CD4-positive, alpha-beta memory T cell (primary cell): ENCODE measurements at regions of chr2 and their contacts with region 1.

Region 1: DNA sequence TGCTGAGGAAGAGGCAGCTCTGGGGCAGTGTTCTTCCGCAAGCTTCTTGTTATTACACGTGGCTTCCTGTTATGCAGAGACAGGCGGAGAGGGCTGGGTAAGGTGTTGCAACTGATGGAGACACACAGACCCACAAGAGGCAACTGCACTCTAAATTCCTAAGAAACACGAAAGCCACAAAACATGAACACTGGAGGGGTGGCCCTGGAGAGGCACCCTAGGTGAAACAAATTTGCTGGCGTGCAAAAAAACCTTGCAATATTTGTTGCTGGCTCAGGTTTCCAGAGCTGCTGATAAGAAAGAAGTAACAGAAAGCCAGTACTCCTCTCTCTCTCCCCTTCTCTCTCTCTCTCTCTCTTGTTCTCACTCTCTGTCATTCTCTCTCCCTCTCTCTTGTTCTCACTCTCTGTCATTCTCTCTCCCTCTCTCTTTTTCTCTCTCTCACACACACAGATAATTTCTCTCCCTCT is 31.8 kb downstream of the ARHGAP25 start:
- DNase-seq: peak; percentile 79 to 89 (median 81)
- H3K4me3 ChIP-seq: peak overlapping the region; percentile 12 to 47
- H3K4me3 Mint-ChIP-seq: peak overlapping the region; percentile 78 to 95 (median 86)
- H3K27ac ChIP-seq: peak overlapping the region; percentile 90
- H3K27ac Mint-ChIP-seq: peak overlapping the region; percentile 95 to 99 (median 98)
- H3K4me1 ChIP-seq: peaks cover 99% of the 10 kb centered on the region
- H3K4me1 Mint-ChIP-seq: peaks cover 85 to 99% (median 92%) of the 10 kb centered on the region in 4 donors
- H3K27me3 ChIP-seq: no peaks in the 10 kb centered on the region
- H3K27me3 Mint-ChIP-seq: peaks cover 0 to 2% of the 10 kb centered on the region in 2 donors

Region 2: DNA sequence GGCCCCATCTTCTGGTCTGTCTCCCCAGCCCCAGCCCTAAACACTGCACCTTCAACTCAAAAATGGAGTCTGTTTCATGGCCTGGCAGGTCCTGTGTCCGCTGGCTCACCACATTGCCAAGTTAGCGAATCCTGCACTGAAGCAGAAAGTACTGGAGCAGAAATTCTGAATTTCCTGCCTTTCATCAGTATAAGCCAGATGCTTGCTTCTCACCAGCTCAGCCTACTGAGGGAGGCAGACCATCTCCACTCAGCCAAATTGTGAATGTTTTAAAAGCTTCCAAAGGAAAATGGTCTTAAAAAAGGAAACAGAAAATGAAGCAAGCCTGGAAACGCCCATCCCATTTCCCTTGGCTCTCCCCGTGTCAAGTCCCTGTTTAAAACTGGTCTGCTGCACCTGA is 861.4 kb before region 1 on chr2:
- CTCF ChIA-PET with region 1: no interaction called
- POLR2A ChIA-PET with region 1: no interaction called
- intact Hi-C with region 1: no loop called
- DNase-seq: no peak
- H3K4me3 ChIP-seq: no peak overlapping the region
- H3K4me3 Mint-ChIP-seq: no peak overlapping the region
- H3K27ac ChIP-seq: no peak overlapping the region
- H3K27ac Mint-ChIP-seq: no peak overlapping the region
- H3K4me1 ChIP-seq: no peaks in the 10 kb centered on the region
- H3K4me1 Mint-ChIP-seq: no peaks in the 10 kb centered on the region
- H3K27me3 ChIP-seq: no peaks in the 10 kb centered on the region
- H3K27me3 Mint-ChIP-seq: peaks cover 0 to 2% of the 10 kb centered on the region in 2 donors

Region 3: GRCh38 chr2:68715353-68716041 is 50.9 kb before region 1 on chr2:
- CTCF ChIA-PET with region 1: interaction called, 5 read pairs
- POLR2A ChIA-PET with region 1: interaction called, 37 read pairs
- intact Hi-C with region 1: loop called (anchors 2 kb)
- DNase-seq: peak; percentile 39 to 55 (median 45)
- H3K4me3 ChIP-seq: peak overlapping the region in 1 of 2 donors; percentile 37
- H3K4me3 Mint-ChIP-seq: peak overlapping the region in 7 of 8 donors; percentile 44 to 76 (median 56)
- H3K27ac ChIP-seq: peak overlapping the region; percentile 29
- H3K27ac Mint-ChIP-seq: peak overlapping the region; percentile 54 to 93 (median 86)
- H3K4me1 ChIP-seq: peaks cover 63% of the 10 kb centered on the region
- H3K4me1 Mint-ChIP-seq: peaks cover 63 to 88% (median 70%) of the 10 kb centered on the region in 4 donors
- H3K27me3 ChIP-seq: no peaks in the 10 kb centered on the region
- H3K27me3 Mint-ChIP-seq: no peaks in the 10 kb centered on the region

Region 4: DNA sequence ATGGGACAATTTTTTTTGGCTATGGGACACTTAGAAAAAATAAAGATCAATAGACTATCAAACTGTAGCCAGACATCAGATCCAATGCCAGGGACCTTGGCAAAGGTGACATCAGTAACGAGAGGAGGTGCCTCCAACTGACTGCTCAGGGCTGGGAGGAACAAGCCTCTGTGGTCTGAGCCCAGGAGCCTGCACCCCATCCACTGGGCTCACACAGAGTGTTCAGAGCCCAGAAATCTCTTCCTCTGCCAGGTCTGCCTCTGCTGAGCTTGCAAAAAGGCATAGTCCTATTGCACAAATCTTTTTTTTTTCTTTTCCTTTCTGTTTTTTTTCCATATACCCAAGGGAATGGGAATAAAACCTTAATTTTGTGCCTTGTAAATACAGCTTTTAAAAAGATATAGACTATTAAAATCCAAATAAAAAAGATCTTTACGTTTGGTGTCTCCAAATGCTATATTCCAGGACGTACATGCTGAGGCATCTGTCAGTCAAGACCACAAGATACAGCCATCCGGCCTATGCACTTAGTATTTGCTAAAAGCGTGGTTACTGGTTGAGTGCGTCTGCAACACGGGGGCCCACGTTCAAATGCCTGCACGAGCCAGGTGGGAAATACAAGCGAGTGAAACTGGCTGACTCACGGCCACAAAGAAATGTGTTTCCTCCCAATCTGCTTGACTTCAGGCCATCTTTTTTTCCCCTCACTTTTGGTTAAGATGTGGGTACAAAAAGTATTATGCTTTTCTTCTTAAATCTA is 39.6 kb before region 1 on chr2:
- CTCF ChIA-PET with region 1: interaction called, 22 read pairs
- POLR2A ChIA-PET with region 1: interaction called, 37 read pairs
- intact Hi-C with region 1: loop called (anchors 2 kb)
- DNase-seq: peak; percentile 78 to 93 (median 81)
- H3K4me3 ChIP-seq: peak overlapping the region; percentile 6 to 9
- H3K4me3 Mint-ChIP-seq: peak overlapping the region; percentile 18 to 73 (median 58)
- H3K27ac ChIP-seq: peak overlapping the region; percentile 44
- H3K27ac Mint-ChIP-seq: peak overlapping the region; percentile 83 to 95 (median 88)
- H3K4me1 ChIP-seq: peaks cover 74% of the 10 kb centered on the region
- H3K4me1 Mint-ChIP-seq: peaks cover 57 to 85% (median 72%) of the 10 kb centered on the region in 4 donors
- H3K27me3 ChIP-seq: no peaks in the 10 kb centered on the region
- H3K27me3 Mint-ChIP-seq: no peaks in the 10 kb centered on the region

Region 5: DNA sequence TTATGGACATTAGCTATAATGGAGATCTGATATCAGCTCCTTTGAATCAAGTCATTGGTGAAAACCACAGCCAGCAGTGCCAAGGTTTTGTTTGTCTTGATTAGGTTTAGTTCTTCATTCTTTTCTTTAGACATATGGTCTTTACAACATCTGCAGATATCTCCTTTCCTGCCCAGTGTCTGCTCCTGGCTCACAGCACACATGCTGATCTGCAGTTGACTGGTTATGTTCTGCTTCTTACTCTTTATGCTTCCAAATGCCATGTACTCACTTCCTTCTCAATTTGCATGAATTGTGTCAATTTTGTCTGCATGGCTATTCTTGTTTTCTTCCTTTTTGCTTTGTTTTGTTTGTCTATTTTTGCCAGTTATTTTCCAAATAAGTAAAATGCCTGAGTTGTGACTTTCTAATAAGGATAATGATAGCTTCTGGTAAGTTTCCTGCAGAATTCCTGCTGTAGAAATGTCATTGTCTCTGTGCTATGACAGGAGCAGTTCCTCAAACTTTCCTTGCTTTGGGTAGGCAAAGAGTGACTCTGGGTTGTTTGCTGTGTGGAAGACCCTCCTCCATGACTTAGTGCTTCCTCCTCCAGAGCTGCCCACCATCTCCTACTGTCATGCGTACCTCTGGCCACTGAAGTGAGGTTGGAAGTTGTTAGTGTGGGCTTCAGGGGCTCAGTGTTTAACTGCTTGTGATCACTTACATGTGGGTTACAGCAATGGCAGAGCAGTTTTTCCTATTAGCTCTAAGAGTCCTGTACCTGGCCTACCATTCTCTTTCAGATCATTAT is 23.6 kb before region 1 on chr2:
- CTCF ChIA-PET with region 1: interaction called, 526 read pairs
- POLR2A ChIA-PET with region 1: interaction called, 728 read pairs
- intact Hi-C with region 1: no loop called
- DNase-seq: no peak
- H3K4me3 ChIP-seq: peak overlapping the region in 1 of 2 donors; percentile 29
- H3K4me3 Mint-ChIP-seq: peak overlapping the region; percentile 61 to 88 (median 79)
- H3K27ac ChIP-seq: no peak overlapping the region
- H3K27ac Mint-ChIP-seq: peak overlapping the region in 6 of 7 donors; percentile 78 to 93 (median 81)
- H3K4me1 ChIP-seq: peaks cover 99% of the 10 kb centered on the region
- H3K4me1 Mint-ChIP-seq: peaks cover 78 to 97% (median 89%) of the 10 kb centered on the region in 4 donors
- H3K27me3 ChIP-seq: no peaks in the 10 kb centered on the region
- H3K27me3 Mint-ChIP-seq: no peaks in the 10 kb centered on the region

Region 6: GRCh38 chr2:68796294-68796905 is 30.0 kb after region 1 on chr2:
- CTCF ChIA-PET with region 1: interaction called, 3 read pairs
- POLR2A ChIA-PET with region 1: interaction called, 24 read pairs
- intact Hi-C with region 1: loop called (anchors 2 kb)
- DNase-seq: peak in 4 of 5 donors; percentile 17 to 35 (median 33)
- H3K4me3 ChIP-seq: peak overlapping the region in 1 of 2 donors; percentile 13
- H3K4me3 Mint-ChIP-seq: peak overlapping the region; percentile 2 to 88 (median 68)
- H3K27ac ChIP-seq: peak overlapping the region; percentile 47
- H3K27ac Mint-ChIP-seq: peak overlapping the region; percentile 78 to 94 (median 86)
- H3K4me1 ChIP-seq: peaks cover 81% of the 10 kb centered on the region
- H3K4me1 Mint-ChIP-seq: peaks cover 73 to 93% (median 81%) of the 10 kb centered on the region in 4 donors
- H3K27me3 ChIP-seq: no peaks in the 10 kb centered on the region
- H3K27me3 Mint-ChIP-seq: no peaks in the 10 kb centered on the region

Region 7: DNA sequence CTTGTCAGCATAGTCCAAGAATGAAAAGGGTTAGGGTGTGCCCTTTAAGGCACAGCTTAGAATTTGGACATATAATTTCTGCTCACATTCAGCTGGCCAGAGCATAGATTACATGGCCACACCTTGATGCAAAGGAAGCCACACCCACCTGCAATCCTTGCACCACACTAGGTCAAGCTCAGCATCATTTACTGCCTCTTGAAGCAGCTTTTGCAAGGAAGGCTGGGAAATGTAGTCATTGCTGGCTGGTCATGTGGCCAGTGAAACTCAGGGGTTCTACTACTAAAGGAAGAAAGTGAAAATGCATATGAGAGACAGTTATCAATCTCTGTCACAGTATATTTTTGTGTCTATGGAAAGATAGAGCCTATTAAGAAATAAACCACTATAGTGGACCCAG is 461.3 kb after region 1 on chr2:
- CTCF ChIA-PET with region 1: no interaction called
- POLR2A ChIA-PET with region 1: no interaction called
- intact Hi-C with region 1: no loop called
- DNase-seq: no peak
- H3K4me3 ChIP-seq: no peak overlapping the region
- H3K4me3 Mint-ChIP-seq: no peak overlapping the region
- H3K27ac ChIP-seq: no peak overlapping the region
- H3K27ac Mint-ChIP-seq: no peak overlapping the region
- H3K4me1 ChIP-seq: no peaks in the 10 kb centered on the region
- H3K4me1 Mint-ChIP-seq: no peaks in the 10 kb centered on the region
- H3K27me3 ChIP-seq: no peaks in the 10 kb centered on the region
- H3K27me3 Mint-ChIP-seq: peaks cover 16 to 27% of the 10 kb centered on the region in 2 donors